Activated naive CD4-positive, alpha-beta T cell treated with anti-CD3 and anti-CD28 coated beads, Interleukin-2, amount 10 ng/mL, durations not matched to agents 7 days and 5 days (primary cell): ENCODE measurements at regions of chr5 and their contacts with region 1.

Region 1: DNA sequence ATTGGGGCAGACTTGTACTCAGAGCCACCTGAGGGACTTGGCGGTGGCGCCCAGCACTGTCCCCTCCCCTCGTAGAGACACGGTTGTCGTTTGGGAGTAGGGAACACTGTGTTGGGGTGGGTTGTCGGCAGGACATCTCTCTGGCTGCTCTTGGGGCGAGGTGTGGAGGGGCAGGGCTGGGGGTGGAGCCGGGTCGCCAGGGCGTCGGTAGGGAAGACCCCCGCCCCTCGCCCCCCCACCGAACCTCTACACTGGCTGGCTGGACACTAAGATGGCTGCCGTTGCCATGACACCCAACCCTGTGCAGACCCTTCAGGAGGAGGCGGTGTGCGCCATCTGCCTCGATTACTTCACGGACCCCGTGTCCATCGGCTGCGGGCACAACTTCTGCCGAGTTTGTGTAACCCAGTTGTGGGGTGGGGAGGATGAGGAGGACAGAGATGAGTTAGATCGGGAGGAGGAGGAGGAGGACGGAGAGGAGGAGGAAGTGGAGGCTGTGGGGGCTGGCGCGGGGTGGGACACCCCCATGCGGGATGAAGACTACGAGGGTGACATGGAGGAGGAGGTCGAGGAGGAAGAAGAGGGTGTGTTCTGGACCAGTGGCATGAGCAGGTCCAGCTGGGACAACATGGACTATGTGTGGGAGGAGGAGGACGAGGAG is 778 bp downstream of the TRIM41 start:
- DNase-seq: peak; percentile 76
- H3K4me3 Mint-ChIP-seq: peak overlapping the region; percentile 96
- H3K27ac Mint-ChIP-seq: peak overlapping the region; percentile 98
- H3K4me1 Mint-ChIP-seq: peaks cover 67% of the 10 kb centered on the region
- H3K27me3 Mint-ChIP-seq: peaks cover 26% of the 10 kb centered on the region

Region 2: GRCh38 chr5:181243512-181244343 is 19.9 kb after region 1 on chr5 and contains the start of gene RACK1:
- CTCF ChIA-PET with region 1: interaction called, 10 read pairs
- DNase-seq: peak; percentile 94
- H3K4me3 Mint-ChIP-seq: peak within 1 kb of the TSS; percentile 98
- H3K27ac Mint-ChIP-seq: peak within 1 kb of the TSS; percentile 97
- H3K4me1 Mint-ChIP-seq: peaks cover 75% of the 10 kb centered on the region
- H3K27me3 Mint-ChIP-seq: no peaks in the 10 kb centered on the region